K562 (cell line): ENCODE measurements at regions of chr11 and their contacts with region 1.

Region 1: DNA sequence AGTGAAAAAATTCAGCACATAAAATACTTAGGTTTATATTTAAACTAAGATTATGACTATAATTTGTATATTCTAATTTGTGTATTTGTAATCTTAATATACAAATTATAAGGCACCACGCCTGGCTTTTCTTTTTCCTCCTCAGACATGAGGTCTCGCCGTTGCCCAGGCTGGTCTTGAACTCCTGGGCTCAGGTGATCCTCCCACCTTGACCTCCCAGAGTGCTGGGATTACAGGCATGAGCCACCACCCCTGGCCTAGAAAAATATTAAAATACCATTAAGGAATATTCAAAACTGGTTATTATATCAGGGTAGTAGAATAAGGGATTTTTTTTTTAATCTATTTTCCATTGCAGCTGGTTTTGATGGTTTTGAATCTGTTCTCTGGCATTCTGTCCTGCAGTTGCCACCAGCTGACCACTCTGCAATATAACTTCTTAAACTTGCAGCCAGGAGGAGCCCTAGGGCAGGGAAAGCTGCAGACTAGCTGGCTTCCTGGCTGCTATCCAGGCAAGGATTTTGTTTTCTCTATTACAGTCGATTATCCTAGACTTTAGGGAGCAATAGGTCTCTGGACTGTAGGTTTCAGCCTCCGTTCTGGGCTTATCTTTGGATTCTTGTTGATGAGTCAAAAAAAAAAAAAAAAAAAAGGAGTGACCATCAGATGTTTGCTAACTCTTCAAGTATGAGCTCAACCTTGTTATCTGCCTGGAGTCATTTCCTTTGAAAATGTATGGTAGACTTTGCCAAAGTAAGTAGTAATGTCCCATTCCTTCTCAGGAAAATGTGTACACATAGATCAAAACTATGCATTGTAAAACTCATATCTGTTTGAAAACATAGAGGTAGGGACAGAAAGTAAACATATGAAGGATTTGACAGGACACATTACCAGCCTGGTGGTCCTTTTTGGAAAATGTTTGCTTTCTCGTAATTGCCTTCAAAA is 13.2 kb downstream of the POLA2 start:
- DNase-seq: peak; percentile 72 to 92 (median 77)
- ATAC-seq: peak; percentile 97
- H3K4me3 ChIP-seq: no peak overlapping the region
- H3K27ac ChIP-seq: peak overlapping the region; percentile 71
- H3K4me1 ChIP-seq: peaks cover 0 to 9% of the 10 kb centered on the region in 2 experiments; a peak in 3 of 5 replicates
- H3K27me3 ChIP-seq: no peaks in the 10 kb centered on the region
- CTCF ChIP-seq: peak; percentile 86 to 97 (median 88)
- EP300 ChIP-seq: peak; percentile 73
- POLR2A ChIP-seq: no peak
- RAD21 ChIP-seq: peak; percentile 94 to 95

Region 2: GRCh38 chr11:65261591-65262380 is 13.2 kb before region 1 on chr11 and contains the start of gene POLA2:
- CTCF ChIA-PET with region 1: interaction called, 3 read pairs
- POLR2A ChIA-PET with region 1: interaction called, 12 read pairs
- in situ Hi-C with region 1: no loop called
- intact Hi-C with region 1: no loop called
- DNase-seq: peak; percentile 98 to 100 (median 100)
- ATAC-seq: peak; percentile 92
- H3K4me3 ChIP-seq: peak within 1 kb of the TSS; percentile 65
- H3K27ac ChIP-seq: peak within 1 kb of the TSS; percentile 83
- H3K4me1 ChIP-seq: peaks cover 9 to 23% of the 10 kb centered on the region in 2 experiments; a peak in 4 of 5 replicates
- H3K27me3 ChIP-seq: no peaks in the 10 kb centered on the region
- CTCF ChIP-seq: no peak
- EP300 ChIP-seq: no peak
- POLR2A ChIP-seq: peak; percentile 96
- RAD21 ChIP-seq: no peak
- polyA plus RNA-seq, gene POLA2: 2.7 to 5.6 TPM

Region 3: DNA sequence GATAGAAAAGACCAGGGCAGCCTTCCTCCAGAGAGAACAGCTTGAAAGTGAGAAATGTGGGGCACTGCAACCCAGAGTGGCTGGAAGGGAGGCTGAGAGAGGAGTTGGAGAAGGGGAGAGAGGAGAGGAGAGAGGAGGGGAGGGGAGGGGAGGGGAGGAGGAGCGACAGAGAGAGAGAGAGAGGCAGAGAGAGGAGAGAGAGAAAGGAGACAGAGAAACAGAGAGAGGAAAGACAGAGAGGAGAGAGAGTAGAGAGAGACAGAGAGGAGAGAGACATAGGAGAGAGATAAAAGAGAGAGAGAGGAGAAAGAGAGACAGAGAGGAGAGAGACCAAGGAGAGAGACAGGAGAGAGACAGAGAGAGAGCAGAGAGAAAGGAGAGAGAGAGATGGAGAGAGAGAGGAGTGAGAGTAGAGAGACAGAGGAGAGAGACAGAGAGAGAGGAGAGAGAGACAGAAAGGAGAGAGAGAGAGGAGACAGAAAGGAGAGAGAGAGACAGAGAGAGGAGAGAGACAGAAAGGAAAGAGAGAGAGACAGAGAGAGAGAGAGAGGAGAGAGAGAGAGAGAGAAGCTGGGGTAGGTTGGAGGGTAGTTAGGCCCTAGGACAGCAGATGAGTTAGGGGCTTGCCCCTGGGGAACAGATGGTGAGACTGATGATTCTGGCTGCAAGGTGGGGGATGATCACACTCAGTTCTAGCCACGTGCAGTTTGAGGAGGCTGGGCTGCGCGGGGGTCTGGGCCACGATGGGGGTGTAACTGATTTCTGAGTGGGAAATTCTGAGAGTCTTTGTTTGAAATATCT is 241.3 kb after region 1 on chr11:
- CTCF ChIA-PET with region 1: interaction called, 6 read pairs
- POLR2A ChIA-PET with region 1: no interaction called
- in situ Hi-C with region 1: loop called (anchors 5 kb)
- intact Hi-C with region 1: loop called (anchors 2 kb)
- DNase-seq: no peak
- ATAC-seq: peak; percentile 62
- H3K4me3 ChIP-seq: no peak overlapping the region
- H3K27ac ChIP-seq: no peak overlapping the region
- H3K4me1 ChIP-seq: peaks cover 0 to 12% of the 10 kb centered on the region in 2 experiments; a peak in 2 of 5 replicates
- H3K27me3 ChIP-seq: no peaks in the 10 kb centered on the region
- CTCF ChIP-seq: no peak
- EP300 ChIP-seq: no peak
- POLR2A ChIP-seq: no peak
- RAD21 ChIP-seq: no peak